ENCODE measurements at regions of chr3 and their contacts with region 1.

Region 1: DNA sequence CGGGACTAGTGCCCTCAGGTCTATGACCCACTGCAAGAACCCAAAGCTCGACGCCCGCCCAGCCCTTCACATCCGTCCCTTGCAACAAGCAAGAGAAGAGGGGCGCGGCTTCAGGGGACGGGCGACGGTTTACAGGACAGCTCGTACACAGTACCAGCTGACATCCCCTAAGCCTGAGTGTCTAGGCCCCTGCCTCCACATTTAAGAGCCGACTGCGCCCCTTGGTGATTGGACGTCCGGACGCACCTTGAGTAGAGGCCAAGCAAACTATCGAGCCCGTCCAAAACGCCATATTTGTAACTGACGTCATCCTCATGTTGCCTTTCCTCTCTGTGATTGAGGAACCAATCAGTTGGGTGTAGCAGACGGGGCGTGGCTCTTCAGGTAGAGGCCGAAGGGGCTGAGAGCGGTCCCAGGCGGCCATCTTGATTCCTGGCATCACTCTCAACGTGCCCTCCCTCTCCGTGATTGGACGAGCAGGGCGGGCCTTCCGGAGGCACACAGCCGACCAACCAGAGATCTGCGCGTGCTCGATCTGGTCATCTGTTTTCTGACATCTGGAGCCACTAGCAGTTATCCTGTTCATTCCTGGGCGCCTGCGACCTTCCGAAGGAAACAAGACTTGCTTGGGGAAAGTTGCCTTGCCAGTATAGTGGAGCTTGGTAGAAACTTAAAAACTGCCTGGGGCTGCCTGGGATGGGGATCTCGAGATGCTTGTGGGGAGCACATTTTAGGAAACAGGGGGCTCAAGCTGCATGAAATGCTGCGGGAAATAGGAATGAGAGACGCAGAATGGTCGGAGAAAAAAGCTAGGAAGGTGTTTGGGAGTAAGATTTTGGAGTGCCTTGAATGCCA is 4.0 kb upstream of the RPL14 start:
- DNase-seq: peak; percentile 95
- H3K4me3 Mint-ChIP-seq: peak overlapping the region; percentile 91
- H3K27ac Mint-ChIP-seq: peak overlapping the region; percentile 96
- H3K4me1 Mint-ChIP-seq: peaks cover 40% of the 10 kb centered on the region
- H3K27me3 Mint-ChIP-seq: no peaks in the 10 kb centered on the region

Region 2: DNA sequence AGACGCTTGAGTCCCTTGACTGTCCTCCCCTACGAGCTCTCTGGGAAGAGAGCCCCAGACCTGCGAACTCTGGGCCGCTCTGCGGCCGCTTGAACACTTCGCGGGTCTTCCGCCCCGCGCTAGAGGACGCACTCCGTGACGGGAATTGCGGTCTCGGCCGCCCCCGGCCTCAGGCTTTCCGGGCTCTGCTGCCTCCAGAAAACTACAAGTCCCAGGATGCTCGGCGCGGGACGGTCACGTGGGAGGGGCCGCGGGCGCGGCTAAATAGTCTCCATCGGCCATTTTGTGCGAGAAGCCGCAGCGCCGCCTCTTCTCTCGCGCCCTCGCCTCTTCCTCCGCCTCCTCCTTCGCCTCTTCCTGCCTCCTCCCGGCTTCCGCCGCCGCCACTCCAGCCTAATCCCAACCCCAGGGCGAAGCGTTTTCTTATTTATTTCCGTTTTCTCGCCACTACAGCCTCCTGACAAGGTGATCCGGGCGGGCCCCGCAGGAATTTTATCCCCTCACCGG is 143.6 kb before region 1 on chr3 and contains the start of gene EIF1B:
- intact Hi-C with region 1: loop called (anchors 1 kb)
- DNase-seq: peak; percentile 98
- H3K4me3 Mint-ChIP-seq: peak within 1 kb of the TSS; percentile 96
- H3K27ac Mint-ChIP-seq: peak within 1 kb of the TSS; percentile 95
- H3K4me1 Mint-ChIP-seq: peaks cover 28% of the 10 kb centered on the region
- H3K27me3 Mint-ChIP-seq: no peaks in the 10 kb centered on the region
- total RNA-seq, gene EIF1B: 49.1 and 49.6 TPM in 2 replicates

Region 3: GRCh38 chr3:40476478-40477470 is 23.7 kb after region 1 on chr3 and contains the start of gene ZNF619:
- intact Hi-C with region 1: loop called (anchors 1 kb)
- DNase-seq: peak; percentile 31
- H3K4me3 Mint-ChIP-seq: peak within 1 kb of the TSS; percentile 91
- H3K27ac Mint-ChIP-seq: peak within 1 kb of the TSS; percentile 78
- H3K4me1 Mint-ChIP-seq: peaks cover 27% of the 10 kb centered on the region
- H3K27me3 Mint-ChIP-seq: peaks cover 10% of the 10 kb centered on the region
- total RNA-seq, gene ZNF619: 7.1 and 8.2 TPM in 2 replicates

Region 4: GRCh38 chr3:40505599-40506462 is 52.7 kb after region 1 on chr3 and contains the start of gene ZNF620:
- intact Hi-C with region 1: loop called (anchors 1 kb)
- DNase-seq: peak; percentile 34
- H3K4me3 Mint-ChIP-seq: peak within 1 kb of the TSS; percentile 89
- H3K27ac Mint-ChIP-seq: peak within 1 kb of the TSS; percentile 47
- H3K4me1 Mint-ChIP-seq: peaks cover 20% of the 10 kb centered on the region
- H3K27me3 Mint-ChIP-seq: no peaks in the 10 kb centered on the region
- total RNA-seq, gene ZNF620: 5.5 and 6.0 TPM in 2 replicates

Region 5: DNA sequence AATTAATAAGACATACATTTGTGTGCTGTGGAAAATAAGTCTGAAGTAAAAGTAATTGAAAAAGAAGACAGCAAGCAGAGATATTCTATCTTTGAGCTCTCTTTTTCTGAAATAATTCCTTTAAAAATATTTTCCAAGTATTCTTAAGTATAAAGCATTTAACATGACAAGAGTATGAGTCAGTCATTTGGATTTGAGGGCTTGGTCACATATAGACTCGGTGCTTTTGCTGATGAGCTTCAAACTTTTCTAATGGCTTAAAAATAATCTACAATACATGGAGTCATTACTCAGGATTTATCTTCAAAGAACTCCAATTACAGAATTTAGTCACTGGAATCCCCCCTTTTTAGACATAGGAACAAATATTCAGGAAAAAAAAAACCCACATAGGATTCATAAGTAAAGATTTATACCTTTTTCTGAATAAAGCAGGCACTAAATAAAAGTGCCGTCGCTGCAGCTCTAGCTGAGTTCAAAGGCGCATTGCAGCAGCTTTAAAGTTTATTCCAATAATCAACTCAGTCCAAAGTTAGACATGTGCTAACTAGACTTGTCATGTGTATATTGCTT is 893.7 kb after region 1 on chr3:
- intact Hi-C with region 1: no loop called
- DNase-seq: no peak
- H3K4me3 Mint-ChIP-seq: no peak overlapping the region
- H3K27ac Mint-ChIP-seq: no peak overlapping the region
- H3K4me1 Mint-ChIP-seq: no peaks in the 10 kb centered on the region
- H3K27me3 Mint-ChIP-seq: no peaks in the 10 kb centered on the region

Region 6: DNA sequence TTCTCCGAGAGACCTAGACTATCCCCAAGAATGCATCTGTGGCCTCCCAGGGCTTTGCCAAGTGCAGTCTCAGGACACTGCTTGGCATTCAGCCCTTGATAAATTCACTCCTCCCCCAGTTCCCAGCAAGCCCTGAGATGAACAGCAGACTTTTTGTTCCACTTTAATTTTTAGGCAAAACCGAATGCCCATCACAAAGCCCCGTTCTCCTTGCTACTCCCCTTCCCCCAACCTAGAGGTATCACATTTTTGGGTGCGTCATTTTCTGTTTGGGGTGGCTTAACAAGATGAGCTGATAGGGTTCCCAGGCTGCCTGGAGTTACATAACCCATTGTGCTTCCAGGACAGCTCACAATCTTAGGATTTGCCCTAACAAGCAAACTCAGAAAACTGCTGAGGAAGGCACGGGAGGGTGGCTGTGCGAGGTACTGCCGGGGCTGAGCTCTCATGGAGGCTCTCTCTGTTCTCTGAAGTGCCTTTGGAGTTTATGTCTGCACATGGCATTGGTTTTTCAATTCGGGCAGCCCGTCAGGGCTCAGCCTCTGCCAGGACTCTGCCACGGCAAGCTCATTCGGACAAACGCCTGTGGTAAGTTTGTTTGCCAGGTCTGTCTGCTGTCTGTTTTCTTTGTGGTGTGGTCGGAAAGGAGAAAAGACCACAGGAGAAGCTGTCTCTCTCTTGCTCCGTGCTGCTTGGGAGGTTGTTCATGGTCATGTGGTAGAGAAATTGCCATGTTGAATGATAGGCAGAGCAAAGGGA is 1638.0 kb after region 1 on chr3 and contains the start of gene TRAK1:
- intact Hi-C with region 1: loop called (anchors 5 kb)
- DNase-seq: no peak
- H3K4me3 Mint-ChIP-seq: peak within 1 kb of the TSS; percentile 11
- H3K27ac Mint-ChIP-seq: peak within 1 kb of the TSS; percentile 64
- H3K4me1 Mint-ChIP-seq: peaks cover 53% of the 10 kb centered on the region
- H3K27me3 Mint-ChIP-seq: no peaks in the 10 kb centered on the region
- total RNA-seq, gene TRAK1: 32.6 and 33.8 TPM in 2 replicates